HepG2 (cell line): ENCODE measurements at regions of chr12 and their contacts with region 1.

Region 1: GRCh38 chr12:71780237-71780822 is 25.7 kb downstream of the RAB21 start:
- DNase-seq: peak; percentile 20
- ATAC-seq: peak; percentile 51; the same call in 1 of the 3 replicates
- H3K4me3 ChIP-seq: no peak overlapping the region
- H3K27ac ChIP-seq: no peak overlapping the region
- H3K4me1 ChIP-seq: no peaks in the 10 kb centered on the region
- H3K27me3 ChIP-seq: no peaks in the 10 kb centered on the region
- CTCF ChIP-seq: peak; percentile 64
- EP300 ChIP-seq: no peak
- POLR2A ChIP-seq: no peak
- RAD21 ChIP-seq: no peak

Region 2: GRCh38 chr12:71708658-71709057 is 71.7 kb before region 1 on chr12:
- CTCF ChIA-PET with region 1: no interaction called
- POLR2A ChIA-PET with region 1: no interaction called
- in situ Hi-C with region 1: no loop called
- intact Hi-C with region 1: no loop called
- DNase-seq: no peak
- ATAC-seq: no peak
- H3K4me3 ChIP-seq: no peak overlapping the region
- H3K27ac ChIP-seq: no peak overlapping the region
- H3K4me1 ChIP-seq: peaks cover 16% of the 10 kb centered on the region
- H3K27me3 ChIP-seq: no peaks in the 10 kb centered on the region
- CTCF ChIP-seq: no peak
- EP300 ChIP-seq: no peak
- POLR2A ChIP-seq: no peak
- RAD21 ChIP-seq: no peak

Region 3: GRCh38 chr12:71799106-71799505 is 18.8 kb after region 1 on chr12:
- CTCF ChIA-PET with region 1: no interaction called
- POLR2A ChIA-PET with region 1: no interaction called
- in situ Hi-C with region 1: no loop called
- intact Hi-C with region 1: no loop called
- DNase-seq: no peak
- ATAC-seq: peak; percentile 41; the same call in 2 of the 3 replicates
- H3K4me3 ChIP-seq: no peak overlapping the region
- H3K27ac ChIP-seq: no peak overlapping the region
- H3K4me1 ChIP-seq: no peaks in the 10 kb centered on the region
- H3K27me3 ChIP-seq: no peaks in the 10 kb centered on the region
- CTCF ChIP-seq: no peak
- EP300 ChIP-seq: no peak
- POLR2A ChIP-seq: no peak
- RAD21 ChIP-seq: no peak

Region 4: DNA sequence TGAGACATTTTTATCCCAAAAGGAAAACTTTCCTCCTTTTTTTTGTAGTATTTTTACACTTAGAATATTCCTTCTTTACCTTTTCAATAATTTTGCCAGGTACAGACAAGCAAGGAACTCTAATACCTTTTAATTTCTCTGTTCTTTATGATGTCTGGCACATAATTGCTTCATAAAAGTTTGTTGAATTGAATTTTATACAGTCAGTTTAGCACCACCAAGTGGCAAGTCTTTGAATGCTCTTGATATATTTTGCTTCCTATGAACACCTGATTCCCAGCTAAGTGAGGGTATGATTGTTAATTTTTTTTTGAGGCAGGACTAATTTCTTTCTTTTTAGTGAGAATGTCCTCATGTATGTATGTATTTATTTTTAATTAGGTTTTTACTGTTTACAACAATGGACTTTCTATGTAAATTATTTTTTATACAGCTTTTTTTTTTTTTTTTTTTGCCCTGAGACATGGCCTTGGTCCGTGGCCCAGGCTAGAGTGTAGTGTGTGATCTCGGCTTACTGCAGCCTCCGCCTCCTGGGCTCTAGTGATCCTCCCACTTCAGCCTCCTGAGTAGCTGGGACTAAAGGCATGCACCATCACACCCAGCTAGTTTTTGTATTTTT is 66.1 kb after region 1 on chr12:
- CTCF ChIA-PET with region 1: interaction called, 5 read pairs
- POLR2A ChIA-PET with region 1: no interaction called
- in situ Hi-C with region 1: no loop called
- intact Hi-C with region 1: loop called (anchors 1 kb)
- DNase-seq: peak; percentile 33
- ATAC-seq: peak; percentile 52; the same call in 2 of the 3 replicates
- H3K4me3 ChIP-seq: no peak overlapping the region
- H3K27ac ChIP-seq: no peak overlapping the region
- H3K4me1 ChIP-seq: peaks cover 36% of the 10 kb centered on the region
- H3K27me3 ChIP-seq: no peaks in the 10 kb centered on the region
- CTCF ChIP-seq: peak; percentile 43
- EP300 ChIP-seq: no peak
- POLR2A ChIP-seq: no peak
- RAD21 ChIP-seq: no peak

Region 5: GRCh38 chr12:71938728-71939385 is 158.5 kb after region 1 on chr12 and contains the start of gene TPH2:
- CTCF ChIA-PET with region 1: interaction called, 9 read pairs
- POLR2A ChIA-PET with region 1: no interaction called
- in situ Hi-C with region 1: no loop called
- intact Hi-C with region 1: loop called (anchors 1 kb)
- DNase-seq: peak; percentile 59
- ATAC-seq: peak; percentile 96
- H3K4me3 ChIP-seq: no peak within 1 kb of the TSS
- H3K27ac ChIP-seq: no peak within 1 kb of the TSS
- H3K4me1 ChIP-seq: no peaks in the 10 kb centered on the region
- H3K27me3 ChIP-seq: no peaks in the 10 kb centered on the region; a peak in 2 of 5 replicates
- CTCF ChIP-seq: peak; percentile 79
- EP300 ChIP-seq: no peak
- POLR2A ChIP-seq: no peak
- RAD21 ChIP-seq: peak; percentile 82
- total RNA-seq, gene TPH2: not detected in 2 replicates